ENCODE measurements at regions of chr6 and their contacts with region 1.

Region 1: DNA sequence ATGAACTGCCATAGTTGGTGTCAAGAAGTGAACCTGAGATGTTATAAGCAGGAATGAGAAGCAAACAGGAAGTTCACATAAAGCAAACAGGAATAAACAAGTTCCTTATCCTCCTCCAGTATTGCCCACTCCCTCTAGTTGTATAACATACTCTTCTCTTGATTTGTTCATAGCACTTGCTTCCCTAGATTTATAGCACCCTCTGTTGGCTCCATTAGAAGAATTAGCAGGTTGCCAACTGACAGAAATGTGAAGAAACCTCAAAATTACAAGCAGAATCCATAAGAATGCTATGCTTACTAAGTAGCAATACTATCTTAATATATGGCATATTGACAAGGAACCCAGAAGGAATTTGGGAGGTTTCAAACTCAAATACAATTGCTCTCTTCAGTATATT is 195.4 kb downstream of the TBX18 start:
- DNase-seq: peak in 1 of 2 experiments; percentile 17
- H3K4me3 ChIP-seq: no peak overlapping the region
- H3K4me3 Mint-ChIP-seq: no peak overlapping the region
- H3K27ac Mint-ChIP-seq: no peak overlapping the region
- H3K4me1 ChIP-seq: no peaks in the 10 kb centered on the region
- H3K4me1 Mint-ChIP-seq: no peaks in the 10 kb centered on the region
- H3K27me3 ChIP-seq: no peaks in the 10 kb centered on the region
- H3K27me3 Mint-ChIP-seq: no peaks in the 10 kb centered on the region
- CTCF ChIP-seq: peak; percentile 22 to 37

Region 2: GRCh38 chr6:84243240-84243639 is 325.7 kb before region 1 on chr6:
- CTCF ChIA-PET with region 1: no interaction called
- POLR2A ChIA-PET with region 1: no interaction called
- intact Hi-C with region 1: loop called (anchors 1 kb)
- DNase-seq: no peak
- H3K4me3 ChIP-seq: no peak overlapping the region
- H3K4me3 Mint-ChIP-seq: no peak overlapping the region
- H3K27ac Mint-ChIP-seq: no peak overlapping the region
- H3K4me1 ChIP-seq: no peaks in the 10 kb centered on the region
- H3K4me1 Mint-ChIP-seq: no peaks in the 10 kb centered on the region
- H3K27me3 ChIP-seq: no peaks in the 10 kb centered on the region
- H3K27me3 Mint-ChIP-seq: no peaks in the 10 kb centered on the region
- CTCF ChIP-seq: peak in 1 of 2 experiments; percentile 29

Region 3: GRCh38 chr6:84284428-84285049 is 284.4 kb before region 1 on chr6:
- CTCF ChIA-PET with region 1: interaction called, 4 read pairs
- POLR2A ChIA-PET with region 1: no interaction called
- intact Hi-C with region 1: loop called (anchors 1 kb)
- DNase-seq: peak in 1 of 2 experiments; percentile 8
- H3K4me3 ChIP-seq: no peak overlapping the region
- H3K4me3 Mint-ChIP-seq: no peak overlapping the region
- H3K27ac Mint-ChIP-seq: no peak overlapping the region
- H3K4me1 ChIP-seq: no peaks in the 10 kb centered on the region
- H3K4me1 Mint-ChIP-seq: no peaks in the 10 kb centered on the region
- H3K27me3 ChIP-seq: no peaks in the 10 kb centered on the region
- H3K27me3 Mint-ChIP-seq: peaks cover 3% of the 10 kb centered on the region
- CTCF ChIP-seq: peak; percentile 22 to 51

Region 4: DNA sequence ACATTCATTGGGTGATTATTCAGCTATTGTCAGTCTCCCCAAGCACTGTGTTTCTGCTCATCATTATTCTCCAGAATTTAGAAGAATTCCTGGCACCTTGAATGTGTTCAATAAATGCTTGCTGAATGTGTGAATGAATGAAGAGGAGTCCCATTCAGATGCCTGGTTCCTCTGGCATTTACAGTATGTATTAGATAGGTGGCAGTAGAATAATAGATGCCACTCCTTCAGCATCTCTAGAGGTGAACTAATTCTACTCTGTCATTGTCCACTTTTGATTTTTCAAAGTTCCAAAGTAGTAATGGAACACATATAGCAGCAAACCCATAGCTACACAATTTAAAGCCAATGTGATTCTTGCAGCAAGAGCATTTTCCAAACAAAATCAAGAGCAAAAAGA is 222.6 kb before region 1 on chr6:
- CTCF ChIA-PET with region 1: no interaction called
- POLR2A ChIA-PET with region 1: no interaction called
- intact Hi-C with region 1: loop called (anchors 1 kb)
- DNase-seq: no peak
- H3K4me3 ChIP-seq: no peak overlapping the region
- H3K4me3 Mint-ChIP-seq: no peak overlapping the region
- H3K27ac Mint-ChIP-seq: no peak overlapping the region
- H3K4me1 ChIP-seq: no peaks in the 10 kb centered on the region
- H3K4me1 Mint-ChIP-seq: peaks cover 6% of the 10 kb centered on the region
- H3K27me3 ChIP-seq: no peaks in the 10 kb centered on the region
- H3K27me3 Mint-ChIP-seq: peaks cover 7% of the 10 kb centered on the region
- CTCF ChIP-seq: peak in 1 of 2 experiments; percentile 13